PC-9 (cell line): ENCODE measurements at regions of chr19 and their contacts with region 1.

Region 1: DNA sequence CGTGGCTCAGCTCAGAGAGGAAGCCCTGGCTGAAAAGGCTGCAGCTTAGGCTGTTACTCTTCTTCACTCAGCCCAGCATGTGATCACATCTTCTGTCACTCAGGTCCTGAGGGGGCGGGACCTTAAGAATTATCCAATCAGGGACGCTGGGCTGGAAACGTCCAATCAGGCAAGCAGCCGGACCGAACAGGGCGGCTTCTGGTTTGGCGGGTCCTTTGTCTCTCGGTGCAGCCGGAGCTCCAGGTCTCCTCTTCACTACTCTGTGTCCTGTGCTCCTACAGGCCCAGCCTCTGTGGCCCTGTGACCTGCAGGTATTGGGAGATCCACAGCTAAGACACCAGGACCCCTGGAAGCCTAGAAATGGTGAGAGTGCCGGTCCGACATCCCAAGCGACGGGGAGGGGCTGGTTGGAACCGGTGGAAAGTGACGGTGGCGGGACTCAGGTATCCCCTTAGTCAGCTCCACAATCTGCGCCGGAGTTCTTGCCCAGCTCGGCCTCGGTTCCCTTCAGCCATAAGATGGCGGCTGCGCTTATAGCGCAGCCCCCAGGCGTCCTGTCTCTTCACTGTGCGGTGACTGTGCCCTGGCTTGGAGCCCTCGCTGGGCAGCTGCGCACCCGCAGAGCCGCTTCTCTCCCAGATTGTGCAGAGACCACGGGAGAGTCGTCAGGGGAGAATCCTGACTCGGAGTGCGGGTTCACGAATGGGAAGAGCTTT is at the start of gene ZNF93:
- DNase-seq: peak; percentile 89 to 93
- H3K4me3 ChIP-seq: peak within 1 kb of the TSS; percentile 75
- H3K27ac ChIP-seq: peak within 1 kb of the TSS; percentile 22
- H3K4me1 ChIP-seq: peaks cover 10% of the 10 kb centered on the region; the same call in 1 of the 2 replicates
- H3K27me3 ChIP-seq: no peaks in the 10 kb centered on the region
- CTCF ChIP-seq: no peak
- total RNA-seq, gene ZNF93: 4.1 and 5.8 TPM in 2 replicates

Region 2: DNA sequence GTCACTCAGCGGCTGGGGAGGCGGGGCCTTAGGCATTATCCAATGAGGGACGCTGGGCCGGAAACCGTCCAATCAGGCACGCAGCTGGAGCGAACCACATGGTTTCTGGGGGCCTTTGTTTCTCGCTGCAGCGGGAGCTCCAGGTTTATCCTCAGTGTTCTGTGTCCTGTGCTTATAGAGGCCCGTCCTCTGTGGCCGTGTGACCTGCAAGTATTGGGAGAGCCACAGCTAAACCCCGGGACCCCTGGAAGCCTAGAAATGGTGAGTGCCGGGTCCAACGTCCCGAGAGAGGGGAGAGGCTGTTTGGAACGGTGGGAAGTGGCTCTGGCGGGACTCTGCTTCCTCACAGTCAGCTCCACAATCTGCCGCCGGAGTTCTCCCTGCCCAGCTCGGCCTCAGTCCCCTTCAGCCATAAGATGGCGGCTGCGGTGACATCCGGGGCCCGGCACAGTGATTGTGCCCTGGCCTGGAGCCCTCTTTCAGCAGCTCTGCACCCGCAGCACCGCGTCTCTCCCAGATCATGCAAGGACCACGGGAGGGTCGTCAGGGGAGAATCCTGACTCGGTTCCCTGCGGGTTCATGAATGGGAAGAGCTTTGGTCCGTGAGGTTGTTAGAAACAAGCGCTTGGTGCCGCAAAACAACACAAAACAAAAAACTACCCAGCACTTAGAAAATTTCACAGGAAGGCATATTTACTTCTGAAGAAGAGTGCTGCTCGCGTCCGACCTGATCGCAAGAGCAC is 35.0 kb before region 1 on chr19 and contains the start of gene ZNF253:
- CTCF ChIA-PET with region 1: no interaction called
- POLR2A ChIA-PET with region 1: interaction called, 5 read pairs
- intact Hi-C with region 1: loop called (anchors 2 kb)
- DNase-seq: peak; percentile 90
- H3K4me3 ChIP-seq: peak within 1 kb of the TSS; percentile 89
- H3K27ac ChIP-seq: peak within 1 kb of the TSS; percentile 48
- H3K4me1 ChIP-seq: no peaks in the 10 kb centered on the region; the same call in 1 of the 2 replicates
- H3K27me3 ChIP-seq: no peaks in the 10 kb centered on the region
- CTCF ChIP-seq: no peak
- total RNA-seq, gene ZNF253: 4.2 and 5.1 TPM in 2 replicates

Region 3: GRCh38 chr19:20233105-20233504 is 332.2 kb after region 1 on chr19:
- CTCF ChIA-PET with region 1: no interaction called
- POLR2A ChIA-PET with region 1: no interaction called
- intact Hi-C with region 1: no loop called
- DNase-seq: no peak
- H3K4me3 ChIP-seq: no peak overlapping the region
- H3K27ac ChIP-seq: no peak overlapping the region
- H3K4me1 ChIP-seq: no peaks in the 10 kb centered on the region
- H3K27me3 ChIP-seq: no peaks in the 10 kb centered on the region
- CTCF ChIP-seq: no peak

Region 4: DNA sequence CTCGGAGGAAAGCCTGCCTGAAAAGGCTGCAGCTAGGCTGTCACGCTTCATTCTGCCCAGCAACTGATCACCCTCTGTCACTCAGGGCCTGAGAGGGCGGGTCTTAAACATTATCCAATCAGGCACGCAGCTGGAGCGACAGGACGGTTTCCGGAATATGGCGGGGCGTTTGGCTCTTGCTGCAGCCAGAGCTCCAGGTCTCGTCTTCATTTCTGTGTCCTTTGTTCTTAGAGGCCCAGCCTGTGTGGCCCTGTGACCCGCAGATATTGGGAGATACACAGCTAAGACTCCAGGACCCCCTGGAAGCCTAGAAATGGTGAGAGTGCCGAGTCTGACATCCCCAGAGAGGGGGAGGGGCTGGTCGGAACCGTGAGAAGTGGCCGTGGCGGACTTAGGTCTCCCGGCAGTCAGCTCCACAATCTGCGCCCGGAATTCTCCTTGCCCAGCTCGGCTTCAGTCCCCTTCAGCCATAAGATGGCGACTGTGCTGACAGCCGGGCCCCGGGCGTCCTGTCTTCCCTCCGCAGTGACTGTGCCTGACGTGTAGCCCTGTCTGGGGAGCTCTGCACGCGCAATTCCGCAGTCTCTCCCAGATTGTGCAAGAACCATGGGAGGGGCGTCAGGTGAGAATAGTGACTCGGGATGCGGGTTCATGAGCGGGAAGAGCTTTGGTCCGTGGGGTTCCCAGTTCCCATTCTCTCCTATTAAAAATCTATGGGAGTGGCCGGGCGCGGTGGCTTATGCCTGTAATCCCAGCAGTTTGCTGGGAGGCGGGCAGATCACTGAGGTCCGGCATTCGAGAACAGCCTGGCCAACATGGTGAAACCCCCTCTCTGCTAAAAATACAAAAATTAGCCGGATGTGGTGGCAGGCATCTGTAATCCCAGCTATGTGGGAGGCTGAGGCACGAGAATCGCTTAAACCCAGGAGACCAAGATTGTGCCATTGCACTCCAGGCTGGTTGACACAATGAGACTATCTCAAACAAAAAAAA is 1604.9 kb after region 1 on chr19 and contains the start of gene ZNF429:
- CTCF ChIA-PET with region 1: no interaction called
- POLR2A ChIA-PET with region 1: interaction called, 10 read pairs
- intact Hi-C with region 1: no loop called
- DNase-seq: peak; percentile 81 to 86
- H3K4me3 ChIP-seq: peak within 1 kb of the TSS; percentile 76
- H3K27ac ChIP-seq: peak within 1 kb of the TSS; percentile 30
- H3K4me1 ChIP-seq: peaks cover 6% of the 10 kb centered on the region; the same call in 1 of the 2 replicates
- H3K27me3 ChIP-seq: no peaks in the 10 kb centered on the region
- CTCF ChIP-seq: no peak; the same call in 1 of the 2 replicates
- total RNA-seq, gene ZNF429: 8.5 and 10.0 TPM in 2 replicates